ENCODE measurements at regions of chrX and their contacts with region 1.

Region 1: DNA sequence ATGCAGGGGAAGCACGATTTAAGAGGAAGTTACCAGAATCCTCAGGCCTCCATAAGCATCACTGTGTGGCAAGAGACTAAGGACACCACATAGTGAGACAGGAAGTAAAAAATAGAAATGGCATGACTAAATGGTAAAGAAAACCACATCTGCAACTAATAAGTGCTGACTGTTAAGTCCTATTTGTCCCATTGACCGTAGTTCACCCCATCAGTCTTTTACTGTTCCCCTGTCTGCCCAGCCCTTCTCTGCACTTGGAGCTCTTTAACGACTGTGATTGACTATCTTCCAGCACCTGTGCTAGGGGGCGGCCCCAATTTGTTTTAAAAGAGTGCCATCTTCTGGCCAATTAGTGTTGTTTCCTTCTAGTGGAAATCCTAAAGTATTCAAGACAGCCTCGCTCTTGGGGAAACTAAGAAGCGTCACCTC is 94.2 kb downstream of the MAOA start:
- DNase-seq: no peak
- ATAC-seq: peak; percentile 95
- H3K4me3 ChIP-seq: no peak overlapping the region
- H3K27ac ChIP-seq: no peak overlapping the region
- H3K4me1 ChIP-seq: no peaks in the 10 kb centered on the region
- H3K27me3 ChIP-seq: no peaks in the 10 kb centered on the region; a peak in 1 of 4 replicates
- CTCF ChIP-seq: peak; percentile 45 to 65 (median 51); a peak in 5 of 6 replicates
- EP300 ChIP-seq: no peak
- POLR2A ChIP-seq: no peak
- RAD21 ChIP-seq: peak; percentile 78

Region 2: DNA sequence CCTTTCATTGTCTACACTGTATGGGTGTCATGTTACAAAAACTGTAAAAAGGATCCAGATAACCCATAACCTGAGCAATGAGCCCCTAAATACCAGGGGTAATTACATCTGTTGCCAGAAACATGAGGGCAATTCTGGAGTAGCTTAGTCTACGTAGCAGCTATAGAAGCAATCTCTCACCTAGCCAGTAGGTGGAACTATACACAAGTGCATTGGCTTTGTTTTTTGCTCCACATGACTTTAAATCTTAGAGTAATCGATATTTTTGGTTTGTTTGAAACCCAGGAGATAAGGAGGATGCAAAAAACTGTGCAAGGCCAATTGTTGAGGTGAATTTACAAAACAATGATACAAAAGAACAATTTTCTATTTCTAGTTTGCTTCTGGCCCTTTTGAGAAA is 1968.8 kb before region 1 on chrX:
- CTCF ChIA-PET with region 1: interaction called, 5 read pairs
- POLR2A ChIA-PET with region 1: no interaction called
- RAD21 ChIA-PET with region 1: interaction called, 4 read pairs
- SMC1A ChIA-PET with region 1: interaction called, 3 read pairs
- in situ Hi-C with region 1: loop called (anchors 5 kb)
- intact Hi-C with region 1: no loop called
- DNase-seq: no peak
- ATAC-seq: peak; percentile 93
- H3K4me3 ChIP-seq: no peak overlapping the region
- H3K27ac ChIP-seq: no peak overlapping the region
- H3K4me1 ChIP-seq: no peaks in the 10 kb centered on the region
- H3K27me3 ChIP-seq: no peaks in the 10 kb centered on the region
- CTCF ChIP-seq: peak; percentile 67 to 80 (median 71)
- EP300 ChIP-seq: no peak
- POLR2A ChIP-seq: no peak
- RAD21 ChIP-seq: peak; percentile 80

Region 3: GRCh38 chrX:43557792-43558191 is 192.5 kb before region 1 on chrX:
- CTCF ChIA-PET with region 1: interaction called, 5 read pairs
- POLR2A ChIA-PET with region 1: no interaction called
- RAD21 ChIA-PET with region 1: interaction called, 3 read pairs
- SMC1A ChIA-PET with region 1: interaction called, 4 read pairs
- in situ Hi-C with region 1: loop called (anchors 5 kb)
- intact Hi-C with region 1: loop called (anchors 1 kb)
- DNase-seq: peak; percentile 23
- ATAC-seq: peak; percentile 78
- H3K4me3 ChIP-seq: no peak overlapping the region
- H3K27ac ChIP-seq: no peak overlapping the region
- H3K4me1 ChIP-seq: no peaks in the 10 kb centered on the region
- H3K27me3 ChIP-seq: no peaks in the 10 kb centered on the region
- CTCF ChIP-seq: peak; percentile 60 to 83 (median 75); a peak in 5 of 6 replicates
- EP300 ChIP-seq: no peak
- POLR2A ChIP-seq: no peak
- RAD21 ChIP-seq: peak; percentile 90

Measured in GM12878 (cell line).